ENCODE measurements at regions of chr16 and their contacts with region 1.

Region 1: GRCh38 chr16:2429771-2430663 is 770 bp downstream of the CCNF start:
- DNase-seq: peak; percentile 45
- ATAC-seq: peak; percentile 35
- H3K4me3 ChIP-seq: peak overlapping the region; percentile 91
- H3K27ac ChIP-seq: no peak overlapping the region
- H3K4me1 ChIP-seq: peaks cover 13% of the 10 kb centered on the region
- H3K27me3 ChIP-seq: no peaks in the 10 kb centered on the region
- CTCF ChIP-seq: peak; percentile 29; the same call in 1 of the 2 replicates

Region 2: DNA sequence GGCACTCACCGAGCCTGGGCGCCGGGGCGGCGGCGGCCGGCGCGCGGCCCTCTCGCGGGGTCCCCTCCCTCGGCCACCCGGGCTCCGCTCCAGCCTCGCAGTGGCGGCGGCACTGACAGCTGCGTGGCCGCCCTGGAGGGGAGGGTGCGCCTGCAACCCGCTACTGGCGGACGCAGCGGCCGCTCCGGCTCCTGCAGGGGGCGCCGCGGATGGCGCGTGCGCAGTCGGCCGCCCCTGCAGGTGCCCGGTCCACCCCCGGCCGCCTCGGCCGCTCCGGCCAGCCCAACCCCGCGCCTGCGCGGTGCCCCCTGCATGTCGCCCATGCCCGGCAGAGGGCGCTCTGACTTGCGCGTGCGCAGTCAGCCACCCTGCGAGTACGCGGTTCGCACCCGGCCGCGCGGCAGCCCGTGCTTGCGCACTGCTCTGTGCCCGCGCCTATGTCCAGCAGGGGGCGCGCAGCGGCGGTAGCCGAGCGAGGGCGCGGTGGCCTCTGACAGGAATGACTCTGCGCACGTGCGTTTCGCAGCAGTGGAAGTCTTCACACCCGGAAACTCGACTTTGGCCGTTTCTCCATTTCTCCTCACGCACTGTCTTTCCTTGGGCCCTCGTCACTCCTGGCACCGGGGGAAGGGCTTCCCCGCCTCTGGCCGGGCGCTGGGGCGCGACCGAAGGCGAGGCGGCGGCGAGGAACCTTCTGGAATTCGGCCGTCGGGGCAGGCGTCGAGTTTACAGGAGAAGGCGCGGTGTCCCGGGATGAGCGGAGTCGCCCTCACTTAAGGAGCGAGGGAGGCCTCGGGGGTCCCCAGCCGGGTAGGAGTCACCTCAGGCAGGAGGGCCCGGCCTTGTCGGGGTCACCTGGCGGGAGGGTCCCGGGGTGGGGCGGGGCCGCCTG is 89.2 kb before region 1 on chr16 and contains the start of gene ABCA3:
- CTCF ChIA-PET with region 1: no interaction called
- POLR2A ChIA-PET with region 1: no interaction called
- intact Hi-C with region 1: loop called (anchors 2 kb)
- DNase-seq: peak; percentile 94
- ATAC-seq: peak; percentile 89
- H3K4me3 ChIP-seq: peak within 1 kb of the TSS; percentile 81
- H3K27ac ChIP-seq: no peak within 1 kb of the TSS
- H3K4me1 ChIP-seq: 0 out of 2 replicates have a peak, but pooled peaks cover 3% of the 10 kb centered on the region
- H3K27me3 ChIP-seq: no peaks in the 10 kb centered on the region
- CTCF ChIP-seq: peak; percentile 89
- total RNA-seq, gene ABCA3: 11.0 and 15.5 TPM in 2 replicates

Region 3: GRCh38 chr16:2392025-2392424 is 38.0 kb before region 1 on chr16:
- CTCF ChIA-PET with region 1: no interaction called
- POLR2A ChIA-PET with region 1: no interaction called
- intact Hi-C with region 1: no loop called
- DNase-seq: peak; percentile 25
- ATAC-seq: no peak
- H3K4me3 ChIP-seq: no peak overlapping the region
- H3K27ac ChIP-seq: no peak overlapping the region
- H3K4me1 ChIP-seq: peaks cover 5% of the 10 kb centered on the region
- H3K27me3 ChIP-seq: no peaks in the 10 kb centered on the region
- CTCF ChIP-seq: no peak

Region 4: GRCh38 chr16:2500918-2501750 is 71.1 kb after region 1 on chr16:
- CTCF ChIA-PET with region 1: interaction called, 3 read pairs
- POLR2A ChIA-PET with region 1: no interaction called
- intact Hi-C with region 1: loop called (anchors 1 kb)
- DNase-seq: peak; percentile 59
- ATAC-seq: peak; percentile 88
- H3K4me3 ChIP-seq: no peak overlapping the region
- H3K27ac ChIP-seq: no peak overlapping the region
- H3K4me1 ChIP-seq: no peaks in the 10 kb centered on the region
- H3K27me3 ChIP-seq: no peaks in the 10 kb centered on the region
- CTCF ChIP-seq: peak; percentile 87